Activated naive CD4-positive, alpha-beta T cell treated with anti-CD3 and anti-CD28 coated beads for 36 hours (primary cell): ENCODE measurements at regions of chr17 and their contacts with region 1.

Region 1: GRCh38 chr17:17476865-17477467 is at the start of gene MED9:
- DNase-seq: peak; percentile 96
- H3K4me3 Mint-ChIP-seq: peak within 1 kb of the TSS; percentile 88
- H3K27ac Mint-ChIP-seq: peak within 1 kb of the TSS; percentile 75
- H3K4me1 Mint-ChIP-seq: peaks cover 53% of the 10 kb centered on the region
- H3K27me3 Mint-ChIP-seq: no peaks in the 10 kb centered on the region
- total RNA-seq, gene MED9: 13.2 to 14.4 TPM

Region 2: GRCh38 chr17:17401271-17401781 is 75.6 kb before region 1 on chr17:
- CTCF ChIA-PET with region 1: no interaction called
- intact Hi-C with region 1: loop called (anchors 5 kb)
- DNase-seq: no peak
- H3K4me3 Mint-ChIP-seq: no peak overlapping the region
- H3K27ac Mint-ChIP-seq: no peak overlapping the region
- H3K4me1 Mint-ChIP-seq: peaks cover 42% of the 10 kb centered on the region
- H3K27me3 Mint-ChIP-seq: no peaks in the 10 kb centered on the region

Region 3: DNA sequence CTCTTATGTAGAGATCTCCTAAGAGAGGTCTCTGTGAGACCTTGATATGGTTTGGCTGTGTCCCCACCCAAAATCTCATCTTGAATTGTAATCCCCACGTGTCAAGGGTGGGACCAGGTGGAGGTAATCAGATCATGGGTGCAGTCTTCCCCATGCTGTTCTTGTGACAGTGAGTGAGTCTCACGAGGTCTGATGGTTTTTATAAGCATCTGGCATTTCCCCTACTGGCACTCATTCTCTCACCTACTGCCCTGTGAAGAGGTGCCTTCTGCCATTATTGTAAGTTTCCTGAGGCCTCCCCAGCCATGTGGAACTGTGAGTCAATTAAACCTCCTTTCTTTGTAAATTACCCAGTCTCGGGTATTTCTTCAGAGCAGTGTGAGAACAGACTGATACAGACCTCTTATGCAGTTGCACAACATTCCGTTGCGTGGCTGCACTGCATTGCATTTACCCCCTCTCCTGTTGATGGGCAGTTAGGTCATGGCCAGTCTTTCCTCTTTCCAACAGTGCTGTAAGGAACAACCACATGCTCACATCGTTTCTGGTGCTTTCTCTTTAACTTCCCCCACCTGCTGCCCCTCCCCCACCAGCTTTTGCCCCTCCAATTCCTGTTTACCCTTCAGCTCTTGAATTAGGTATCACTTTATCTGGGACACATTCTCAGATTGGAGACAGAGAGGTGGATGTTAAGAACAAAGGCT is 43.8 kb before region 1 on chr17:
- CTCF ChIA-PET with region 1: no interaction called
- intact Hi-C with region 1: no loop called
- DNase-seq: no peak
- H3K4me3 Mint-ChIP-seq: no peak overlapping the region
- H3K27ac Mint-ChIP-seq: no peak overlapping the region
- H3K4me1 Mint-ChIP-seq: no peaks in the 10 kb centered on the region
- H3K27me3 Mint-ChIP-seq: no peaks in the 10 kb centered on the region